ENCODE measurements at regions of chr2 and their contacts with region 1.

Region 1: DNA sequence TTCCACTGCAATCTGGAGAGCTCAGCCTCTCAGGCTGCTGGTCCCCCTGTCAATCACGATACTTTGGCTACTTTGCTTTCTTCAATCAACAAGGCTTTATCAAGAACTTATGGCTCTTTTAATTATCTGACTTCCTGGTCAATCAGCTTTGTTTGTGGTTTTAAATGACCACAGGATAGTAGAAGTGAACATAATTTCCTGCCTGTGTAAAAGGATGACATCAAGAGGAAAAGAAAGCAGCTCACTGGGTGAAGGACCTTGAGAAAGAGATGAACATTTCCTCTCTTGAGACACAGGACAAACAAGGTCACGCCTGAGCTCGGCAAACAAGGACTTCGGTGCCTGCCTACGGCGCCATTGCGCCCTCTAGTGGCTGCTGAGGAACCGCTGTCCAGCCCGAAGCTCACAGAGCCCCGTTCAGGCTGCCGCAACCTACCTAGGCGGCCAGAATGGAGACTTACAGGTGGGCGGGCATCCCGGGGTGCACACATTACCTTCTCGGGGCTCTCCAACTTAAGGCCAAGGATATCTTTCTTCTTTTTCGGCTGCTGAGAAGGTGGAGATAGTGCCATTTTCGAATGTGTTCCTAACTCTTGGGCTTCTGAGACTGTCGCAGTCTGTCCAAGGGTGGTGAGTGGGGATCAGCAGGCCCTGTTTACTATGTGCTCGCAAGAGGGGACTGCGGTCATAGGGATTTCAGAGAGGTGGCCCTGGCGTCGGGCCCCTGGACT is 54.0 kb downstream of the IL1RL2 start:
- DNase-seq: peak; percentile 89 to 95
- ATAC-seq: peak; percentile 97

Region 2: DNA sequence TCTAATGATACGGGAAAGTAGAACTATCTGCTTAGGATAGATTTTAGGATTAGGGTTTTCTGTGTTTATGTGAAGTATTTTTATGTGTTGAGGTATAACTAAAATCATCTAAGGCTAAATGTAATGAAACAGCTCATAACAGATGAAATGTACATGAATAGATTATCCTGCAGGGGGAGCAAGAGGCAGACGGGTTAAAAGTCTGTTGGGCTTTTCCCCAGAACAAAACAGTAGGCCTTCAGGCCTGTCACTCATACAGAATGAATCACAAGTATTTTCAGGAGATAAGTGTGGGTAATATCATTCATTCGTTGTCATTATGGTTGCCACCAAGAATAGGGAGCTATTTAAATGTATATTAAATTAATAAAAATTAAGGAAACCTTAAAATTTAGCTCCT is 356.9 kb before region 1 on chr2:
- intact Hi-C with region 1: loop called in 1 of 2 experiments (anchors 10 kb)
- DNase-seq: peak in 1 of 2 donors; percentile 13
- ATAC-seq: peak; percentile 90

Region 3: GRCh38 chr2:102020596-102021181 is 220.1 kb before region 1 on chr2:
- intact Hi-C with region 1: loop called (anchors 5 to 10 kb)
- DNase-seq: peak; percentile 77 to 88
- ATAC-seq: peak; percentile 95

Region 4: DNA sequence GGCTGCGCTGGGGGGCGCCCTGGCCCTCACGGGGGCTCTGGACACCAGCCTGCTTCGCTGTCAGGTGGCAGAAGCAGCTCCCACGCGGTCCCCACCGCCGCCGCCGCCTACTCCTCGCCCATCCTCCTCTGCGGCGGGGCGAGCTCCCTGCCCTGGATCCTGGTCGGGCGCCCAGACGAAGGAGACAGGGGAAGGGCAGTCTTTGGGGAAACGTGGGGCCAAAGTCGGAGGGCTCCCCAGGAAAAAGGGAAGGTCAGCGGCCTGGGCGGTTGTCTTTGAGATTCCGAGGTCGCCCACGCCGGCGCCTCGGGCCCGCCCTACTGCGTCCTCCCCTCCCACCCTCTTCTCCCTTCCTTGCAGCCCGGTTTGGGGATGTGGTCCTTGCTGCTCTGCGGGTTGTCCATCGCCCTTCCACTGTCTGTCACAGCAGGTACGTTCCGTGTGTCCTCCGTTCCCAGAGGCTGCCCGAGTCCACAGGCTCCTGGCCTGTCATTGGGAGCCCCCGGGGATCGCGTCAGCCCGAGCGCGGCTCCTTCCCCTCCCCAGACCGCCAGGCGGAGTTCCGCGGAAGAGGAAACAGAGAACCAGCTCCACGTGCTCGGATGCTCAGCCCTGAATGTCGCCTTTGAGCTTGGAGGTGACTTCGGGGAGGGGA is 53.2 kb before region 1 on chr2:
- intact Hi-C with region 1: loop called in 1 of 2 experiments (anchors 5 kb)
- DNase-seq: peak; percentile 36 to 57
- ATAC-seq: peak; percentile 73

Region 5: DNA sequence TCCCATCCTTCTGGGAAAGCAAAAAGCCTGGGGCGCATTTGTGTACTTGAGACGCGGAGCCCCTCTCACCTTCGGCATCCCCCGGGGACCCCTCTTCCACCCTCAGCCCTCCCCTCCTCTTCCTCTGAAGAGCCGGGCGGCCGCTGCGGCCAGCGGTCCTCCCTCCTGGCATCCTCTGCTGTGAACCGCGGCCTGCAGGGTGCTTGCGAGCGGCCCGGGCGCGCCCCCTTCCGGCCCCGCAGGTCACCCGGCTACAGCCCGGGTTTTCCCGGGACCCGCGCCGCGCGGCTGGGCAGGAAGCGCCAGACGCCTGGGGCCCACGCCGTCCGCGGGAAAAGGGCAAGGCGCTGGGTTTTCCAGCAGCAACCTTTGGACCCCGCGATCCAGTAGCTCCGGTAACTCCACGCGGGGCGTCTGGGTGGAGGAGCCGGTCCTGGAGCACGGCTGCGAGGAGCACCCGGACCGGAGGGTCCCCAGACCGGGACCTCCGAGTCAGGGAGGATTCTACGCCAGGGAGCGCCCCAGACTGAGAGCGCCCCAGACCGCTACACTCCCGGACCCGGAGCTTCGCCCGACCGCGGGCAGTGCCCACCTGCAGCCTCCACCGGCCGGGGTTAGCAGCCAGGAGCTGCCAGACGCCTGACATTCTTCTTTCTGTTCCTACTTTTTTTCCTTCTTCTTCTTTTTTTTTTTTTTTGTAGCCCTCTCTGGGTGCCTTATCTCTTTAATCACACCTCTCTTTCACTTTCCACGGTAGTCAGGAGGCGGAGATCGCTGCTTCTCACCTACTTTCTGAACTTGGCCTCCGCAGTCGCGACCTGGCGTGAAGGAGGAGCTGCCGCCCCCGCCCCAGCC is 114.9 kb after region 1 on chr2 and contains the start of gene IL18R1:
- intact Hi-C with region 1: no loop called
- DNase-seq: peak; percentile 59 to 83
- ATAC-seq: peak; percentile 99
- total RNA-seq, gene IL18R1: 3.0 to 3.2 TPM

Measured in left colon (tissue), 2 donors.